ENCODE measurements at regions of chr5 and their contacts with region 1.

Region 1: GRCh38 chr5:67182301-67182790 is 14.3 kb downstream of the CD180 start:
- DNase-seq: peak; percentile 86
- H3K4me3 ChIP-seq: no peak overlapping the region
- H3K27ac ChIP-seq: no peak overlapping the region
- H3K4me1 ChIP-seq: peaks cover 13% of the 10 kb centered on the region
- H3K27me3 ChIP-seq: no peaks in the 10 kb centered on the region
- CTCF ChIP-seq: no peak
- POLR2A ChIP-seq: no peak

Region 2: DNA sequence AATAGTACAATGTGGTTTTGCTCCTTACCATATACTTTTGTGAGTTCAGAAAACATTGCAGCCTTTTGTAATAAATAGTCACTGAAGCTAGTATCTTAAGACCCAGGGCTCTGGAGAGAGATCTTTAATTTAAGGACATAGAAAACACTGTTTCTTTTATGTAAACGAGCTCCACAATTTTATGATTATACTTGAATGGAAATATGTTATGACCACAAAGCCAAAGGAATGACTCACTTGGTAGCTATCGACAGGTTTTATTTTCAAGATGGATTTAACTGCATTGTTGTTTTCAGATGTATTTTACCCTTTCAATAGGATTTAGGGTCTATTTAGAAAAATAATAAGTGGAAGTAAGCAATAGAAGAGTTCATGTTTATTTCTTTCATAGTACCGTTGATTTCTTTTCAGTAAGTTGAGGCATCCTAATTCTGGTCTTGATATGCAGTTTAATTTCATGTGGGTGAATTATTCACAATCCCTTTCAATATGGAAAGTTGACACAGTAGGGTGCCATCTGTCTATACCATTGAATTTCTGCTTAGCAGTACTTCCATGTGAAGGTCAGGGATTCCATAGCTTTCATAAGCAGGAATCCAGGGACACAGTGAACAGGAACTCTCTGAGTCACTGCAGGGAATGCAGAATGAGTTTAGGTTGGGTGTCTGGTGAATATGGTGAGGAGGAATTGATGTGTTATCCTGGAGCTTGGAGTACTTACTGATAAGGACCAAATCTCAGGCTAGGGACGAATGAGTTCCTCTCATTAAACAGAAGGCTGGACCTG is 143.3 kb before region 1 on chr5:
- CTCF ChIA-PET with region 1: no interaction called
- POLR2A ChIA-PET with region 1: no interaction called
- dilution Hi-C with region 1: no loop called
- intact Hi-C with region 1: no loop called
- DNase-seq: peak; percentile 85
- H3K4me3 ChIP-seq: no peak overlapping the region
- H3K27ac ChIP-seq: peak overlapping the region; percentile 65
- H3K4me1 ChIP-seq: peaks cover 46% of the 10 kb centered on the region
- H3K27me3 ChIP-seq: no peaks in the 10 kb centered on the region
- CTCF ChIP-seq: no peak
- POLR2A ChIP-seq: no peak

Region 3: GRCh38 chr5:67165526-67166459 is 16.6 kb before region 1 on chr5:
- CTCF ChIA-PET with region 1: interaction called, 12 read pairs
- POLR2A ChIA-PET with region 1: no interaction called
- dilution Hi-C with region 1: no loop called
- intact Hi-C with region 1: no loop called
- DNase-seq: peak; percentile 74
- H3K4me3 ChIP-seq: no peak overlapping the region
- H3K27ac ChIP-seq: peak overlapping the region; percentile 42
- H3K4me1 ChIP-seq: peaks cover 8% of the 10 kb centered on the region
- H3K27me3 ChIP-seq: no peaks in the 10 kb centered on the region
- CTCF ChIP-seq: peak; percentile 74 to 88
- POLR2A ChIP-seq: no peak

Region 4: DNA sequence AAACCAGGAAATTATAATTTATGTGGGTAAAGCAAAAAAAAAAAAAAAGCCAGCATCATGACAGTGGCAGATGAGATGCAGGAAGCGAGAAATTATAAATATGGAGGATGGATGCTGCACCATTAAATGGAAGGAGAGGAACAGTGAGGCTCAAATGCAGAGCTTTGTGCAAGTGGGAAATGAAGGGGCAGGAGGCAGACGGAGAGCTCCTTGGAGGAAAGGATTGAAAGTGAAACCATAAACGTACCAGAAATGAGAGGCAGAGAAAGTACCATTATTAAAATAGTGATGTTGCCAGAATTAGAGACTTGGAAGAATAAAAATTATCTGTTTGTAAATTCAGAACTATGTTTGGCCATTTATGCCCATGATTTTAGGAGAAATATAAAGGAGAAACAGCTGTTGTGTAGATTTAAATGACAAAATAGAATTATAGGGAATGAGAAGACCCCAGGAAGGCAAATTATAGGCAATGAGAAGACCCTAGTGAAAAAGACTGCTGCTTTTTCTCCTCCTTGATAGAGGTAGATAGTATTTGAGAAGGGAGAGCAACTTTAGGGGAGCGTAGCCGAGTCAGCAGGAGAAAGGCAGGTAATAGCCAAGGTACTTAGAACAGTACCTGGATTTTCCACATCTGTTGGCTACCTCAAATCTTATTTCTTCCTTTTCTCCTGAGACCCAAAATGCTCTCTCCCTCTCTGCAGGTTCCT is 355.2 kb after region 1 on chr5:
- CTCF ChIA-PET with region 1: no interaction called
- POLR2A ChIA-PET with region 1: no interaction called
- dilution Hi-C with region 1: no loop called
- intact Hi-C with region 1: no loop called
- DNase-seq: peak; percentile 11
- H3K4me3 ChIP-seq: peak overlapping the region in 1 of 3 experiments; percentile 2
- H3K27ac ChIP-seq: no peak overlapping the region
- H3K4me1 ChIP-seq: no peaks in the 10 kb centered on the region
- H3K27me3 ChIP-seq: no peaks in the 10 kb centered on the region
- CTCF ChIP-seq: no peak
- POLR2A ChIP-seq: no peak

Measured in endothelial cell of umbilical vein (primary cell).